ENCODE measurements at regions of chr2 and their contacts with region 1.

Region 1: GRCh38 chr2:95022309-95023221 is 2.9 kb upstream of the MAL start:
- DNase-seq: no peak
- H3K4me3 ChIP-seq: no peak overlapping the region
- H3K27ac ChIP-seq: no peak overlapping the region
- H3K4me1 ChIP-seq: peaks cover 0 to 21% (median 11%) of the 10 kb centered on the region in 4 donors
- H3K27me3 ChIP-seq: peaks cover 19 to 54% (median 29%) of the 10 kb centered on the region in 3 donors
- CTCF ChIP-seq: peak; percentile 57 to 96 (median 79)
- EP300 ChIP-seq: no peak
- POLR2A ChIP-seq: no peak

Region 2: GRCh38 chr2:95076784-95077529 is 54.4 kb after region 1 on chr2:
- intact Hi-C with region 1: loop called (anchors 5 kb)
- DNase-seq: peak; percentile 73
- H3K4me3 ChIP-seq: peak overlapping the region; percentile 14 to 46 (median 38)
- H3K27ac ChIP-seq: no peak overlapping the region
- H3K4me1 ChIP-seq: peaks cover 2 to 10% (median 9%) of the 10 kb centered on the region in 4 donors
- H3K27me3 ChIP-seq: peaks cover 0 to 62% (median 32%) of the 10 kb centered on the region in 3 donors
- CTCF ChIP-seq: peak; percentile 26 to 77 (median 60)
- EP300 ChIP-seq: no peak
- POLR2A ChIP-seq: no peak

Region 3: DNA sequence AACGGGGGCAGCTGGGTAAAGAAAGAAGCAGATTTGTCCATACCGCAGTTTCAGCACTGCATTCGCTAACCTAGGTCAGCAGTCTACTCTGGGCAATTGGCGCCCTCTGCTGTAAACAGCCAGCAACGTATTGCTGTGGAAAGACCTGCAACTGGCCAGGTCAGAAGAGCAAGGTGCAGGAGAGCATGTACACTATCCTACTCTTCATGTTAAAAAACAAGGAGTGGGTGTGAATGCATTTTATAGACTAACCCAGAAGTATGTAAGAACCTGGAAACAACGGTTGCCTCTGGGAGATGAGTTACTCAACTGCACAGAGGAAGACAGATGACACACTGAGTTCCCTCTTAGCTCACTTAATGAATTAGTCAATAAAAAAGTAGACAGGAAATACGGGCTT is 92.9 kb after region 1 on chr2:
- intact Hi-C with region 1: loop called (anchors 5 kb)
- DNase-seq: peak; percentile 70
- H3K4me3 ChIP-seq: no peak overlapping the region
- H3K27ac ChIP-seq: no peak overlapping the region
- H3K4me1 ChIP-seq: peaks cover 0 to 33% (median 28%) of the 10 kb centered on the region in 4 donors
- H3K27me3 ChIP-seq: no peaks in the 10 kb centered on the region
- CTCF ChIP-seq: peak; percentile 13 to 75 (median 44)
- EP300 ChIP-seq: no peak
- POLR2A ChIP-seq: no peak